BJ (cell line): ENCODE measurements at regions of chr11 and their contacts with region 1.

Region 1: GRCh38 chr11:87284306-87284705 is 246.6 kb downstream of the TMEM135 start:
- DNase-seq: no peak
- H3K4me3 ChIP-seq: no peak overlapping the region
- H3K27me3 ChIP-seq: no peaks in the 10 kb centered on the region
- CTCF ChIP-seq: no peak

Region 2: DNA sequence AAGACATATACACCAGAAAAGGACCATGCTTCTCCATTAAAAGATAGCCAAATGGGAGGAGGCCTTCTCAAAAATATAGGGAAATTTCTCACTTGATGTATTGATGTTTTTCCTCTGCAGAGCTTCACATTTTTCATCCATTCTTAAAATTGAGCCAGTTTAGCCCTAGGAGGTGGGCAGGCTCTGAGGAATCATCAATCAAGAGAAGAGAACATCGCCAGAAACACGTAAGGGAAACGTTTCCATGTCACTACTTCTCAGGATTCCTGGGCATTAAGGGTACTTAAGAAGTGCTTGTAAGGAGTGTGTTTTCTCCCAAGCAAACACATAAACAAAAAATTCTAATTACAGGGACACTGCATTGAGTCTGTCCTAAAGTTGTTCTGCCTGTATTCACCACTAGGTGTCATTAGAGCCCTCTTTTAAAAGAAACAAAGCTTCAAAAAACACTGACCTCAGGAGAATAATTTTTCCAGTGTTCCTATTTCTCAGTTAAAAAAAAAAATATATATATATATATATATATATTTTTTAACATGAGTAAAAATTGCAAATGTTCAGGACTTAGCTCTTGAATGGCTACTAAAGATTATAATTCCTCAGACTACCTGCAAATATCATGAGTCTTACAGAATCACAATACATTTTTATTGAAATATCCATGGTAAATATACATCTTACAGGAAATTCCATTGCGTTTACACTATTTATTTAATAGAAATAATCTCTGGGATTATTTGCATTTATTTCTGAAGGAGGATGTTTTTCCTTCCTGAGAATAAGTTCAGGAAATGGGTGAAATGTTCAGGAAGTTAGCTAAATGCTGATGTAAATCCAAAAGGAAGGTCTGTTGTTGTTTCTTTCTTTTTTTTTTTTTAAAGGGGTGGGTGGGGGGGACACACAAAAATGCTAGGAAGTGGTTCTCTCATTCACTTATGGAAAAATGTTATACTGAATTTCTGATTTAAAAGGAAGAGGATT is 345.1 kb before region 1 on chr11:
- CTCF ChIA-PET with region 1: interaction called, 12 read pairs
- POLR2A ChIA-PET with region 1: no interaction called
- DNase-seq: no peak
- H3K4me3 ChIP-seq: no peak overlapping the region
- H3K27me3 ChIP-seq: no peaks in the 10 kb centered on the region
- CTCF ChIP-seq: peak; percentile 65

Region 3: DNA sequence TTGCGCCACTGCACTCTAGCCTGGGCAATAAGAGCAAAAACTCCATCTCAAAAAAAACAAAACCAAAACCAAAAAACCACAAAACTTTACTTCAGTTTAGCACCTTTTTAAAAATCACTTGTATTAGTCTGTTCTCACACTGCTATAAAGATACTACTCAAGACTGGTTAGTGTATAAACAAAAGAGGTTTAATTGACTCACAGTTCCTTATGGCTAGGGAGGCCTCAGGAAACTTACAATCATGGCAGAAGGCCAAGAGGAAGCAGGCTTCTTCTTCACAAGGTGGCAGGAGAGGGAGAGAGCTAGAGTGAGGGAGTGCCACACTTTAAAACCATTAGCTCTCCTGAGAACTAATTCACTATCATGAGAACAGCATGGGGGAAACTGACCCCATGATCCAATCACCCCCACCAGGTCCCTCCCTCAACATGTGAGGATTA is 14.8 kb after region 1 on chr11:
- CTCF ChIA-PET with region 1: no interaction called
- POLR2A ChIA-PET with region 1: no interaction called
- DNase-seq: no peak
- H3K4me3 ChIP-seq: no peak overlapping the region
- H3K27me3 ChIP-seq: no peaks in the 10 kb centered on the region
- CTCF ChIP-seq: no peak

Region 4: GRCh38 chr11:87398931-87399330 is 114.6 kb after region 1 on chr11:
- CTCF ChIA-PET with region 1: no interaction called
- POLR2A ChIA-PET with region 1: no interaction called
- DNase-seq: no peak
- H3K4me3 ChIP-seq: no peak overlapping the region
- H3K27me3 ChIP-seq: no peaks in the 10 kb centered on the region
- CTCF ChIP-seq: no peak